ENCODE measurements at regions of chr12 and their contacts with region 1.

Region 1: GRCh38 chr12:6367065-6367968 is 8.0 kb downstream of the SCNN1A start:
- DNase-seq: peak; percentile 59

Region 2: GRCh38 chr12:6335451-6336078 is 31.8 kb before region 1 on chr12:
- CTCF ChIA-PET with region 1: interaction called, 14 read pairs
- POLR2A ChIA-PET with region 1: interaction called, 19 read pairs
- DNase-seq: peak; percentile 55

Measured in HEK293T (cell line).